H1 (cell line): ENCODE measurements at regions of chr17 and their contacts with region 1.

Region 1: GRCh38 chr17:39621523-39622379 is 5.0 kb upstream of the PPP1R1B start:
- DNase-seq: peak in 1 of 2 experiments; percentile 100
- H3K4me3 ChIP-seq: no peak overlapping the region
- H3K27ac ChIP-seq: no peak overlapping the region
- H3K4me1 ChIP-seq: peaks cover 0 to 20% (median 14%) of the 10 kb centered on the region in 4 experiments; a peak in 6 of 7 replicates
- H3K27me3 ChIP-seq: peaks cover 18 to 53% (median 50%) of the 10 kb centered on the region in 4 experiments
- CTCF ChIP-seq: peak; percentile 100
- EP300 ChIP-seq: peak in 1 of 2 experiments; percentile 49; a peak in 1 of 3 replicates
- POLR2A ChIP-seq: no peak
- RAD21 ChIP-seq: peak; percentile 96 to 97

Region 2: DNA sequence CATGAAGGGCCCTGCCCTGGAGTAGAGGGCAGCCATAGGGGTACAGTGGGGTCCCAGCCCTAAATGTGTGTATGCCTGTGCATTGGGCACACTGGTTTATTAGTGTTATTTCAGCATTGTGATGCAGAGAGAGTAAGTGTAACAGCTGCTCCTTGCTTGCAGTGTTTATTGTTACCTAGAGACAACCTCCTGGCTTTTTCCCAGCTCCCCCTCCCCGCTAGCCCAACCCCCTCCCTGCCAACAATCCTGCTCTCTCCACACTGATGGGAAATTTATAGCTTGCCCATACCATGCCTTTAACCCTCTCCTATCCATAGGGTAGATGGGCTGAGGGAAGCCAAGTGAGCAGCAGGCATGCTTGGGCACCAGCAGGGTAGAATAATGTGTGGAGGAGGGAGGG is 65.3 kb before region 1 on chr17:
- CTCF ChIA-PET with region 1: interaction called, 310 read pairs
- POLR2A ChIA-PET with region 1: no interaction called
- DNase-seq: no peak
- H3K4me3 ChIP-seq: no peak overlapping the region
- H3K27ac ChIP-seq: no peak overlapping the region
- H3K4me1 ChIP-seq: peaks cover 0 to 10% (median 4%) of the 10 kb centered on the region in 4 experiments; a peak in 4 of 7 replicates
- H3K27me3 ChIP-seq: no peaks in the 10 kb centered on the region
- CTCF ChIP-seq: no peak
- EP300 ChIP-seq: no peak
- POLR2A ChIP-seq: no peak
- RAD21 ChIP-seq: no peak

Region 3: DNA sequence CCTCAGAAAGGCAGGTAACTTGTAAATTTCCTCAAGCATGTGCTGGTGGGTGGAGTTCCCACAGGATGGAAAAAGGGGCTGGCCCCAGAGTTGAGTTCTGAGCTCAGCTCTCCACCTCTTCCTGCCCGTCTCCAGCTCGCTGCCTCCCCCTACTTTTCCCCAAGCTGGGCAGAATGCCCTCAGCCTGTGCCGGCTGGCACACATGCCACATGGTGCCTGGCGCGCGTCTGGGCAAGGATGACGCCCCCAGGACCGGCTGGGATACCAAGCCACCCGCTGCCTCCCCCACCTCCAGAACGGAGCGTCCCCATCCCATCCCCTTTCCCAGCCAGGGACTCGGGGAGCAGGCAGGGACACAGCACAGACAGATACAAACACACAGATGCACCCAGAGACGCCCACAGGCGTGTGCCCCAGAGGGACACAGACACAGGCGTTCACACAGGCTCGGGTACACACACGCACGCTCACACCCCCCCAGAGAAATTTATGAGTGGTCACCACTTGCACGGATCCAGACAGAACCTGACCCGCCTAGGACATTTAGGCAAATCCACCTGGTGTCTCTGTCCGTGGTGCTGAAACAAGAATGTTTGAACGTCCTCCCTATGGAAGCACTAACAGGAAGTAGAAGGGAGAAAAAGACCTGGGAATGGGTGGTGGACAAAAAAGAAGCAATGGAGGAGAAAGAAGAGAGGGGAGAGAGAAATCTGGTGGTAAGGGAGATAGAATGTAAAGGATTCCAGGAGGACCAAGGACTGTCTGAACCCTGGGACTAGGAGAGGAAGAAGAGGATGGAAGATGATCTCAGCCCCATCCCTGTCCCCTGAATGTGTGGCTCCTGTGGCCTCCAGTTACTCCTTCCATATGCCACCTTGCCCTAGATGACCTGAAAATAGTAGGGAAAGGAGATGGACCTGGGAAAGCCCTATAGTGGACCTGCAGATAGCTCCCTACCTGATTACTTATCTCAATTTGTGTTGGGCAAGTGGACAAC is 29.5 kb before region 1 on chr17:
- CTCF ChIA-PET with region 1: interaction called, 15 read pairs
- POLR2A ChIA-PET with region 1: no interaction called
- DNase-seq: peak in 1 of 2 experiments; percentile 90
- H3K4me3 ChIP-seq: peak overlapping the region in 2 of 4 experiments; percentile 23 to 44; a peak in 5 of 8 replicates
- H3K27ac ChIP-seq: no peak overlapping the region
- H3K4me1 ChIP-seq: peaks cover 5 to 29% (median 17%) of the 10 kb centered on the region in 4 experiments
- H3K27me3 ChIP-seq: peaks cover 23 to 50% (median 47%) of the 10 kb centered on the region in 4 experiments
- CTCF ChIP-seq: no peak
- EP300 ChIP-seq: no peak
- POLR2A ChIP-seq: no peak
- RAD21 ChIP-seq: no peak

Region 4: GRCh38 chr17:39605492-39606433 is 16.0 kb before region 1 on chr17:
- CTCF ChIA-PET with region 1: interaction called, 1,096 read pairs
- POLR2A ChIA-PET with region 1: interaction called, 11 read pairs
- DNase-seq: peak in 1 of 2 experiments; percentile 81
- H3K4me3 ChIP-seq: peak overlapping the region; percentile 19 to 59 (median 34); a peak in 7 of 8 replicates
- H3K27ac ChIP-seq: no peak overlapping the region
- H3K4me1 ChIP-seq: peaks cover 5 to 50% (median 28%) of the 10 kb centered on the region in 4 experiments
- H3K27me3 ChIP-seq: peaks cover 78 to 95% (median 91%) of the 10 kb centered on the region in 4 experiments
- CTCF ChIP-seq: no peak
- EP300 ChIP-seq: no peak
- POLR2A ChIP-seq: no peak
- RAD21 ChIP-seq: no peak

Region 5: DNA sequence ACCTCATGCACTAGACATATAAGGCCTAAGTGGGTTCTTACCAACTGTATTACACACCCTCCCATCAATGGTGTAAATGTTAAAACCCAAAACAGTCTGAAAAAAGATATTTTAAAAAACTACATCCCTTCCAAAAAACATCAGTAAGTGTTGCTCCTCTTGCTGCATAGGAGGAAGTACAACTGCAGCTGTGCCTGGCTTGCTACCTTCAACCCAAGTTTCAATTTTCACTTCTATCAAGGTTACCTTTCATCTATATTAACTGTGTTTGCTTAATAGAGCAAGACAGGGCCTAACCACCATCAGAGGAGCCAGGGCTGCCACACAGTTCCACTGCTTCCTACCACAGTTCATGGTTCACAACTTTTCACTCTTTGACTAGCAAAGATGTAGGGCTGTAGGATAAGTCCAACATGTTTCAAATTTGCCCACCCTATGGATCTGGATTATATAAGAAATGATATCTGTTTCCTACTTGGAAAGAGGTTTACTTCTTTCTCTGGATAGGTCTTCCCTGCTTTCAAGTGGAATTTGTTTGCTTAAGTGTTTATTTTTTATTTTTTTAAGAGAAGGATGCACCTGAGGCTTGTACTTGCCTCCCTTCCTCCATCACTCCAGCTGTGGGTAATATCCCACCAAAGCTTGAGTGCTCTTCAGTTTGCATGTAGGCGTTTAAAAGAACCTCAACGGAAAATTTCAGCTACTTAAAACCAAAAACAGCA is 172.7 kb after region 1 on chr17:
- CTCF ChIA-PET with region 1: no interaction called
- POLR2A ChIA-PET with region 1: no interaction called
- DNase-seq: no peak
- H3K4me3 ChIP-seq: no peak overlapping the region
- H3K27ac ChIP-seq: no peak overlapping the region
- H3K4me1 ChIP-seq: peaks cover 0 to 4% (median 0%) of the 10 kb centered on the region in 4 experiments; a peak in 2 of 7 replicates
- H3K27me3 ChIP-seq: no peaks in the 10 kb centered on the region
- CTCF ChIP-seq: no peak
- EP300 ChIP-seq: no peak
- POLR2A ChIP-seq: no peak
- RAD21 ChIP-seq: no peak